PC-3 (cell line): ENCODE measurements at regions of chr1 and their contacts with region 1.

Region 1: DNA sequence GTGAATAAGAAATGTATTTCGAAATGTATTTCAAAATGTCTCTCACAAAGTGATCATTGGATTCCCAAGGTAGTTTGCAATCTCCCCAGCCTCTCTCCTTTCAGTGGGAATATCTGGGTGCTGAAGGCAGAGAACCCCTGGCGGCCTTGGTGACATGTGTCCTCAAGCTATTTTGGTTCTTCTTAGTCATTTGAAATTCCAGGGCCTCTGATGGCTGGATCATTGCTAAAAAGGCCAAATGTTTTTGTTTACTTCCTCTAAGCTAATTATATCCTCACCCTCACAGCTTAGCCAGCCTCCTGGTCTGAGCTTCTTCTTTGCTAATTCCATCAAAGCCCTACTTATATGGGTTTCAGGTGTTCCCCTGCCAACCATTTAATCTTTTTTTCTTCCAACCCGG is 71.2 kb downstream of the LRRC40 start:
- DNase-seq: peak; percentile 7
- ATAC-seq: no peak
- H3K4me3 ChIP-seq: no peak overlapping the region
- H3K27ac ChIP-seq: no peak overlapping the region
- H3K4me1 ChIP-seq: no peaks in the 10 kb centered on the region
- H3K27me3 ChIP-seq: no peaks in the 10 kb centered on the region
- CTCF ChIP-seq: no peak

Region 2: GRCh38 chr1:70034403-70034802 is 99.7 kb before region 1 on chr1:
- CTCF ChIA-PET with region 1: no interaction called
- POLR2A ChIA-PET with region 1: no interaction called
- intact Hi-C with region 1: loop called (anchors 2 kb)
- DNase-seq: peak; percentile 84
- ATAC-seq: peak; percentile 97
- H3K4me3 ChIP-seq: no peak overlapping the region
- H3K27ac ChIP-seq: no peak overlapping the region
- H3K4me1 ChIP-seq: no peaks in the 10 kb centered on the region; the same call in 1 of the 2 replicates
- H3K27me3 ChIP-seq: peaks cover 10% of the 10 kb centered on the region; the same call in 1 of the 2 replicates
- CTCF ChIP-seq: peak; percentile 76

Region 3: DNA sequence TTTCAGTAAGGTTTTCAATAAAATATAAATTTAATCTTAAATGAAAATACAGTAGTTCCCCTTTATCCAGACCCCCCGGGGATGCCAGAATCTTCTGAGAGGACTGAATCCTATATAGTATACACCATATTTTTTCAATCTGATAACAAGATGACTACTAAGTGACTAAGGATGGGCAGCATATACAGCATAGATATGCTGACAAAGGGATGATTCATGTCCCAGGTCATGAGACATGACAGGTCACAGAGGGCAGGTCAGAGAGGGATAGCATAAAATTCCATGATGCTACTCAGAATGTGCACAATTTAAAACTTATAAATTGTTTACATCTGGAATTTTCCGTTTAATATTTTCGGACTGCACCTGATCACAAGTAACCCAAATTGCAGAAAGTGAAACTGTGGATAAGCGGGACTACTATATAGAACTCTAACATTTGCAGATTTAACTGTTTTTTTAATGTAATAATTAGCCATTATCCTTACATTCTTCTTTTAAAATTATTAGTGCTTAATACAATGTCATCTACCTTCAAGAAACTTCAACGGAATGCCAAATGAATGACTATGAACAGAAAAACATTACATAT is 22.5 kb after region 1 on chr1:
- CTCF ChIA-PET with region 1: no interaction called
- POLR2A ChIA-PET with region 1: no interaction called
- intact Hi-C with region 1: no loop called
- DNase-seq: peak; percentile 40
- ATAC-seq: peak; percentile 68
- H3K4me3 ChIP-seq: no peak overlapping the region
- H3K27ac ChIP-seq: no peak overlapping the region
- H3K4me1 ChIP-seq: peaks cover 4% of the 10 kb centered on the region; the same call in 1 of the 2 replicates
- H3K27me3 ChIP-seq: no peaks in the 10 kb centered on the region
- CTCF ChIP-seq: no peak

Region 4: GRCh38 chr1:70188522-70188921 is 54.4 kb after region 1 on chr1:
- CTCF ChIA-PET with region 1: no interaction called
- POLR2A ChIA-PET with region 1: no interaction called
- intact Hi-C with region 1: no loop called
- DNase-seq: no peak
- ATAC-seq: no peak
- H3K4me3 ChIP-seq: no peak overlapping the region
- H3K27ac ChIP-seq: no peak overlapping the region
- H3K4me1 ChIP-seq: no peaks in the 10 kb centered on the region
- H3K27me3 ChIP-seq: no peaks in the 10 kb centered on the region
- CTCF ChIP-seq: no peak

Region 5: GRCh38 chr1:70487910-70488665 is 353.9 kb after region 1 on chr1:
- CTCF ChIA-PET with region 1: no interaction called
- POLR2A ChIA-PET with region 1: no interaction called
- intact Hi-C with region 1: loop called (anchors 1 kb)
- DNase-seq: peak; percentile 73
- ATAC-seq: peak; percentile 58
- H3K4me3 ChIP-seq: no peak overlapping the region
- H3K27ac ChIP-seq: 0 out of 2 replicates have a peak overlapping the region, but pooled peaks have one; percentile 12
- H3K4me1 ChIP-seq: peaks cover 20% of the 10 kb centered on the region
- H3K27me3 ChIP-seq: no peaks in the 10 kb centered on the region
- CTCF ChIP-seq: peak; percentile 91

Region 6: DNA sequence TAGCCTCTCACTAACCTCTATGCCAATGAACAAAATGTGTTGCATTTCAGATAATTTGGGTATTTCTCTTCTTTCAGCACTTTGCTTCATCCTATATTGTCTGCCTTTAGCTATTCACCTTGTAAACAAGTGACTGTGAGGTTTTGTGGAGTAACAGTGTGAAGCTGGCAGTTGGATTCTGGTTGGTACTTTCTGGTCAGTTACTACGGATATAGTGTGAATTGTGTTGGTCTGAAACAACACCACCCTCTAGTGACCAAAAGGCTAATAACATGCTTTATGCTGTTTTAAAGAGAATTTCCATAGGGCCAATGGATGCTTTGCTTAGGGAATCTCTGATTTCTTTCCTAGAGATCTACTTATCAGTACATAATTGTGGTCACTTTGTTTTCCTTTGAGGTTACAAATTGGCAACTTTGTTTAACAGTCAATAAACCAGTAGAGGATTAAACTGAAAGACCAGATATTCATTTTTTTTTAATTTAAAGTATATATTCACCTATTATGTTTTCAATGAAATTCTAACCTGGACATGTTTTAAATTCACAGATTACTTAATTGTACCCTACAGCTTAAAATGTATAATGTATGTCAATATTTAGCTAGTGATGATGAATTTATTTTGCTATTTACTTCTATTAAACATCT is 915.9 kb after region 1 on chr1:
- CTCF ChIA-PET with region 1: no interaction called
- POLR2A ChIA-PET with region 1: no interaction called
- intact Hi-C with region 1: loop called (anchors 5 kb)
- DNase-seq: peak; percentile 80
- ATAC-seq: peak; percentile 52
- H3K4me3 ChIP-seq: no peak overlapping the region
- H3K27ac ChIP-seq: no peak overlapping the region
- H3K4me1 ChIP-seq: no peaks in the 10 kb centered on the region
- H3K27me3 ChIP-seq: peaks cover 41% of the 10 kb centered on the region
- CTCF ChIP-seq: peak; percentile 84